AG04449 (cell line): ENCODE measurements at regions of chr1 and their contacts with region 1.

Region 1: DNA sequence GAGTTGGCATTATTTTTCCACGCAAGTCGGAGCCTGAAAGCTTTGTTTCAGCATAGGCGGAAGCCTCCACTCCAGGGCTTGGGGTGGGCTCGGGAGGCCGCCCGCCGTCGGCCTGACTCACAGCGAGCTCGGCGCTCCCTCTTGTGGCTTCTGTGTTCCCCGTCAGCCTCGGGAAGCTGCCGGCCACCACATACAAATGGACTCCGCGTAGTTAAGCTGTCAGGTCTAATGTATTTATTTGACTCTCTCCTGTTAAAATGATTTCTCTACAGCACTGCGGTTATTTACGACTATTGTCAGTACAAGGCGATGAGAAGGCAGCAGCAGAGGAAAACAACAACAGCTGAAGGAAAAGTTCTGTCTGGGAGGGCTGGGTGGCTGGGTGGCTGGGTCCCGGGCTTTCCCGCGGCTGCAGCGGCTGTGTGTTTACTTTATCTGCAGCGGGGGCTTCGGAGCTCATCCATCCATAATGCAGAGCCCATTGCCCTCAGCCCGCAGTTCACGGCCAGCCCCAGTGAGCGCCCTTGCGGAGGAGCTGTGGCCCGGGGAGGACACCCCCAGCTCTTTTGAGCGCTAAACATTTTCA is 375.7 kb upstream of the CAMK1G start:
- DNase-seq: peak; percentile 4
- H3K4me3 ChIP-seq: peak overlapping the region; percentile 48
- CTCF ChIP-seq: peak; percentile 95

Region 2: DNA sequence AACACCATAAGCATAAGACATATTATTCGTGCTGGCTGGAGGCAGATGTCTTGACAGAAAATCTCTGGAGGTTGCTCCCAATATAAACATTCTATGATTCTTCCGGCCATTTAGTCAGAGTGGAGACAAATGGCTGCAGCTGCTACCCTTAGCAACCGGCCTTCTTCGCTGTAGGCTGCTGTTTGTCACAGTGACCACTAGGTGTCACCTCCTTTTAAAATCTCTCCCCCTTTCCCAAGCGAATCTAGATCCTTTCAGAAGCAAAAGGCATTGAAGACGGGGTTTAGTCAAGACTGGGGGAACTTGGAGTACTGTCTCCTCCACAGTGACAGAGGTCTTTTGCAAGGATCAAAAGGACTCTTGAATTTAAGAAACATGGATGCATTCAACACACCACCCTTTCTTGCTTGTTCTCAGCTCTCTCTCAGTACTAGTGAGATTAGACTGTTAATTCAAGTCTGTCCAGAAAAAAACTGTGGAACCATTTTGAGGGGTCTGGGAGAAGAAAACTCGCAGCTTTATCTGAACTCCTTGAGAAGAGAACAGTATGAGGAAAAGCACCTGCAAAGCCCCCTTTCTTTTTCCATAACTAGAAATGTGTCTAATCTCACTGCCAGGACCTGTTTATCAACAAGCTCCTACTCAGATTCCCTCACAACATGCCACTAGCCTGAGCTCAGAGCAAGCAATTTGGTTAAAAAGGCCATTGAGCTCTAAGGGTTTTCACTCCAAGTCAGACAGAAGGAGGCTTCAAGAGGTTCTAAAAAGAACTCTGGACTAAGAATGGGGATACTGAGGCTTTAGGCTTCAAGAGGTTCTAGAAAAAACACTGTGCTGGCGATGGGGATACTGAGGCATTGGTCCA is 555.3 kb before region 1 on chr1:
- CTCF ChIA-PET with region 1: interaction called, 18 read pairs
- POLR2A ChIA-PET with region 1: no interaction called
- DNase-seq: peak; percentile 28
- H3K4me3 ChIP-seq: no peak overlapping the region
- CTCF ChIP-seq: peak; percentile 78

Region 3: GRCh38 chr1:208934933-208935332 is 272.9 kb before region 1 on chr1:
- CTCF ChIA-PET with region 1: no interaction called
- POLR2A ChIA-PET with region 1: no interaction called
- DNase-seq: no peak
- H3K4me3 ChIP-seq: no peak overlapping the region
- CTCF ChIP-seq: no peak

Region 4: GRCh38 chr1:209162651-209163050 is 45.1 kb before region 1 on chr1:
- CTCF ChIA-PET with region 1: no interaction called
- POLR2A ChIA-PET with region 1: no interaction called
- DNase-seq: peak; percentile 12
- H3K4me3 ChIP-seq: no peak overlapping the region
- CTCF ChIP-seq: no peak

Region 5: GRCh38 chr1:209229494-209230059 is 21.8 kb after region 1 on chr1:
- CTCF ChIA-PET with region 1: interaction called, 11 read pairs
- POLR2A ChIA-PET with region 1: no interaction called
- DNase-seq: no peak
- H3K4me3 ChIP-seq: no peak overlapping the region
- CTCF ChIP-seq: no peak

Region 6: GRCh38 chr1:209276321-209276720 is 68.5 kb after region 1 on chr1:
- CTCF ChIA-PET with region 1: no interaction called
- POLR2A ChIA-PET with region 1: no interaction called
- DNase-seq: no peak
- H3K4me3 ChIP-seq: no peak overlapping the region
- CTCF ChIP-seq: no peak

Region 7: GRCh38 chr1:209455145-209455544 is 247.4 kb after region 1 on chr1:
- CTCF ChIA-PET with region 1: interaction called, 16 read pairs
- POLR2A ChIA-PET with region 1: no interaction called
- DNase-seq: no peak
- H3K4me3 ChIP-seq: no peak overlapping the region
- CTCF ChIP-seq: no peak

Region 8: DNA sequence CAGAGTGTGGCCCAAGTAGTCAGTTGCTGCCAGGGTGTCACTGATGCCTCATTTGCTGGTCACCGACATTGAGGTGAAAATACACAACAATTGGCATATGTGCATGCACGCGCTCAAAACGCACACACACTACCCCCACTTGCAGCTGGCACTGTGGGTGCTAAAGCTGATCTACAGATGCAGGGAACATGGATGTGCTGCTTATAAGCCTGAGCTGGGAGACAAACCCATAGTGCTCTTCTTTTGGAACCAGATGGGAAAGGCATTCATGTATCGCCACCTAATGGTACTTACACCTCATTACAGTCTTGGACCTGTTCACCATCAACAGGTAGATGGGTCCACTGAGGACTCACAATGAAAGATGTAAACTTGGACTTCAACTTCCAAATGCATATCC is 305.4 kb after region 1 on chr1:
- CTCF ChIA-PET with region 1: interaction called, 41 read pairs
- POLR2A ChIA-PET with region 1: no interaction called
- DNase-seq: no peak
- H3K4me3 ChIP-seq: no peak overlapping the region
- CTCF ChIP-seq: peak; percentile 63